ENCODE measurements at regions of chr2 and their contacts with region 1.

Region 1: GRCh38 chr2:51224790-51225189 is 192.9 kb upstream of the NRXN1 start:
- DNase-seq: no peak
- ATAC-seq: no peak
- H3K4me3 ChIP-seq: no peak overlapping the region
- H3K27ac ChIP-seq: no peak overlapping the region
- H3K4me1 ChIP-seq: no peaks in the 10 kb centered on the region
- H3K27me3 ChIP-seq: no peaks in the 10 kb centered on the region
- CTCF ChIP-seq: no peak
- POLR2A ChIP-seq: no peak

Region 2: DNA sequence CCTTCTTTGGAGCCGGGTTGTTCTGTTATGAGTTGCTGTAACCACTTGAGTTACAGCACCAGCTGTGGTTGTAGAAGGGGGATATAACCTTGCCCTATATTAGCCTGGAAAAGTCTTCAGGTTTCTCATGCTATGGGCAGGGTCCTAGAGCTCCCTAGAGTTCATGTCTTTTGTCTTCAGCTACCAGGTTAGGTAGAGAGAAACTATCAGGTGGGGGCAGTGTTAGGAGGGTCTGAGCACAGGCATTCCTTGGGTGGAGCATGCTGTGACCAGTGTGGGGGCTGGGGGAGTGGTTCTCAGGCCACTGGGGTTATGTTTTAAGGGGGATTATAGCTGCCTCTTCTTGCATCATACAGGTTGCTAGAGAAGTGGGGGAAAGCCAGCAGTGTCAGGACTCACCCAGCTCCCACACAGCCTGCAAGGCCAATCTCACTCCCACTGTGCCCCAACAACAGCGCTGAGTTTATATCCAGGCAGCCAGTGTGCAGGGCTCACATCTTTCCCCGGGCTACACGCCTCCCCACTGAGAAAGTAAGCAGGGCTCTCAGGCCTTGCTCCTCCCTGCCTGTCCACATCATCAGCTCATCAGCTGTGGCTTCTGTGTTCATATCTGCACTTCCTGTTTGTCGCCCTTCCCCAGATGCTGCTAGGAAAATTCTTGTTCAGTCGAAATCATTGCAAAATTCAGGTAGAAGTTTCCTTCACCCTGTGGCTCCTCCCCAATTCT is 59.1 kb before region 1 on chr2:
- intact Hi-C with region 1: loop called in 1 of 10 experiments (anchors 2 kb)
- DNase-seq: no peak
- ATAC-seq: no peak
- H3K4me3 ChIP-seq: no peak overlapping the region
- H3K27ac ChIP-seq: no peak overlapping the region
- H3K4me1 ChIP-seq: no peaks in the 10 kb centered on the region
- H3K27me3 ChIP-seq: no peaks in the 10 kb centered on the region
- CTCF ChIP-seq: no peak
- POLR2A ChIP-seq: no peak